Activated CD4-positive, alpha-beta T cell treated with anti-CD3 and anti-CD28 coated beads for 36 hours (primary cell): ENCODE measurements at regions of chr6 and their contacts with region 1.

Region 1: DNA sequence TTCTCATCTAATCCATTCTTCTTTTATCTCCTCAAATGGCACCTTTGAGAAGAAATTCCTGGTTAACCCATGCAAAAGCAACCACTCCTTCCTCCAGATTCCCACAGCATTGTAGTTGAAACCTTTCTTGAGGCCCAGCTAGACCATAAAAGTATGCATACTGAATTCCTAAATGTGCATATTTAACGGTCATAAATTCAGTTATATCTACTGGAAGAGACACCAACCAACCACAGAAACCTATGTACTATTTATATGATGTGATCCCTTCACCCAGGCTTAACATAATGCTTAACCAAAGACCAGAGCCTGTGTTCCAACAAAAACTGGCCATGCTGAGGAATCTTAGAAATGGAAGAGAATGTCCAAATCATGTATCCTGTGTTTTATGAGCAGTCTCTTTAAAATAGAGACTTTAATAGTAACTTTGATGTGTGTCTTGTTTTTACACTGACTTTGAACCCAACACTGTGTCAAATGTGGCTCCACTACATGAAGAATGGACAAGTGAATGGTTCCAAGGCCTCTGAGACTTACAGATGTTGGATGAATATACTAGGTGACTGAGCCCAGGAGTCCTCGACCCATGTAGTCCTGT is 11.4 kb upstream of the TAF8 start:
- DNase-seq: no peak
- ATAC-seq: no peak
- H3K4me3 Mint-ChIP-seq: peak overlapping the region; percentile 88
- H3K27ac Mint-ChIP-seq: peak overlapping the region; percentile 100
- H3K4me1 Mint-ChIP-seq: peaks cover 78% of the 10 kb centered on the region
- H3K27me3 Mint-ChIP-seq: no peaks in the 10 kb centered on the region

Region 2: GRCh38 chr6:41936073-41936837 is 102.7 kb before region 1 on chr6:
- CTCF ChIA-PET with region 1: interaction called, 355 read pairs
- POLR2A ChIA-PET with region 1: interaction called, 28 read pairs
- intact Hi-C with region 1: loop called (anchors 1 kb)
- DNase-seq: peak; percentile 83
- ATAC-seq: peak; percentile 54
- H3K4me3 Mint-ChIP-seq: peak overlapping the region; percentile 100
- H3K27ac Mint-ChIP-seq: peak overlapping the region; percentile 96
- H3K4me1 Mint-ChIP-seq: peaks cover 55% of the 10 kb centered on the region
- H3K27me3 Mint-ChIP-seq: no peaks in the 10 kb centered on the region

Region 3: GRCh38 chr6:41958022-41958856 is 80.7 kb before region 1 on chr6:
- CTCF ChIA-PET with region 1: interaction called, 5 read pairs
- POLR2A ChIA-PET with region 1: interaction called, 6 read pairs
- intact Hi-C with region 1: loop called (anchors 1 kb)
- DNase-seq: peak; percentile 71
- ATAC-seq: peak; percentile 87
- H3K4me3 Mint-ChIP-seq: peak overlapping the region; percentile 32
- H3K27ac Mint-ChIP-seq: peak overlapping the region; percentile 97
- H3K4me1 Mint-ChIP-seq: peaks cover 83% of the 10 kb centered on the region
- H3K27me3 Mint-ChIP-seq: no peaks in the 10 kb centered on the region

Region 4: GRCh38 chr6:42009966-42010891 is 28.7 kb before region 1 on chr6:
- CTCF ChIA-PET with region 1: interaction called, 11 read pairs
- POLR2A ChIA-PET with region 1: interaction called, 5 read pairs
- intact Hi-C with region 1: loop called (anchors 1 to 5 kb)
- DNase-seq: peak; percentile 71
- ATAC-seq: peak; percentile 71
- H3K4me3 Mint-ChIP-seq: peak overlapping the region; percentile 66
- H3K27ac Mint-ChIP-seq: peak overlapping the region; percentile 98
- H3K4me1 Mint-ChIP-seq: peaks cover 76% of the 10 kb centered on the region
- H3K27me3 Mint-ChIP-seq: no peaks in the 10 kb centered on the region

Region 5: GRCh38 chr6:42028234-42029061 is 10.5 kb before region 1 on chr6:
- CTCF ChIA-PET with region 1: interaction called, 18 read pairs
- POLR2A ChIA-PET with region 1: interaction called, 11 read pairs
- intact Hi-C with region 1: loop called in 1 of 2 experiments (anchors 1 kb)
- DNase-seq: peak; percentile 60
- ATAC-seq: peak; percentile 48
- H3K4me3 Mint-ChIP-seq: peak overlapping the region; percentile 74
- H3K27ac Mint-ChIP-seq: peak overlapping the region; percentile 99
- H3K4me1 Mint-ChIP-seq: peaks cover 94% of the 10 kb centered on the region
- H3K27me3 Mint-ChIP-seq: no peaks in the 10 kb centered on the region